CD14-positive monocyte (primary cell): ENCODE measurements at regions of chr2 and their contacts with region 1.

Region 1: DNA sequence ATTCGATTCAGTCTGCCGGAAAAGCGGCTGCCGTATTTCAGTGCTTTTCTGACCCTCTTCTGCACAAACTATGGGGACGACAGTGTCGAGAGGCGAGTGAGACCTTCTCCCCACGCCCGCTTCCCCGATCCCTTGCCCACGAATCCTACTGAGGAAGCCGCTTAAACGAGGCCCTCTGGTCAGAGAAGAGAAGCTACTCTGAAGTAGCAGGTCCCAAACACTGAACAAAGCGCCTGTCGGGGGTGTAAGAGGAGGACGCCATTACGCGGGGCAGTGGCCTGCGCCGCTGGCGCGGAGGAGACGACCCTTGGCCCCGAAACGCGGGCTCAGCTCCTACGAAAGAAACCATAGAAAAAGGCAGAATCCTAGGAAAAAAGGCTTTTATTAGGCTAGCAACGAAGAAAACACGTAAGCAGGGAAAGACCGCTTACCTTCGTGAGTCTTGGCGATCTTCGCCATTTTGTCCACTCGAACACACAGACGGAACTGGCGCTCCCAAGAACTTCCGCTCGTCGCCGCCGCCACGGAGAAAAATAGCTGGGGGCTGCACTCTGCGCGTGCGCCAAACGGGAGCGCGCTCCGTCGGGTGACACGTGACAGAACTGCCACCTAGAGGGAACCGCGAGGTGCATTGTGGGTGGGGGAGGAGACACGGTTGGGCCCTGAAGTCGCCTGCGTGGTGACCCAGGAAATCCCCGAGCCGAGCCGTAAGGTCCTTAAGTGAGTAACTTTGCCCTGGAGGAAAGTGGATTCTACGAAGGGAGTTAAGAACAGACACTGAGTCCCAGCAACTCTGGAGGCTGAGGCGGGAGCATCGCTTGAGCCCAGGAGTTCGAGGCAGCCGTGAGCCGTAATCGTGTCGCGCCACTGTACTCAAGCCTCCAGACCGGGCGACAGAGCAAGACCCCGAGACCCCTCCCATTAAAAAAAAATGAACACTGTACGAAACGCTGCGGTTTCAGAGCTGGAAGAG is at the start of gene SF3B1:
- DNase-seq: peak; percentile 99 to 100 (median 99)
- H3K4me3 ChIP-seq: peak within 1 kb of the TSS; percentile 91 to 96 (median 91)
- H3K4me3 Mint-ChIP-seq: peak within 1 kb of the TSS; percentile 95 to 99
- H3K27ac ChIP-seq: peak within 1 kb of the TSS; percentile 96 to 99
- H3K27ac Mint-ChIP-seq: peak within 1 kb of the TSS; percentile 100
- H3K4me1 ChIP-seq: peaks cover 40 to 43% of the 10 kb centered on the region in 2 donors
- H3K4me1 Mint-ChIP-seq: peaks cover 44% of the 10 kb centered on the region
- H3K27me3 ChIP-seq: no peaks in the 10 kb centered on the region
- H3K27me3 Mint-ChIP-seq: no peaks in the 10 kb centered on the region
- CTCF ChIP-seq: no peak
- polyA plus RNA-seq, gene SF3B1: 105 to 494 (median 152) TPM

Region 2: DNA sequence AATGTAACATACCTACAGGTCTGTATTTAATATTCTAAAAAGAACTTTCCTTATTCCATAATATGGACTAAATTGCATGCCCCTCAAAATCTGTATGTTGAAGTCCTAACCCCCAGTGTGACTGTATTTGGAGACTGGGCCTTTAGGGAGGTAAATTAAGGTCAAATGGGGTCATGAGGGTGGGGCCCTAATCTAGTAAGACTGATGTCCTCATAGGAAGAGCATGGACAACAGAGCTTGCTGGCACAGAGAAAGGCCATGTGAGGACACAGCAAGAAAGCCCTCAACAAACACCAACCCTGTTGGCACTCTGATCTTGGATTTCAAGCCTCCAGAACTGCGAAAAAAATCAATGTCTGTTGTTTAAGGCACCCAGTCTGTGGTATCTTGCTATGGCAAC is 18.6 kb before region 1 on chr2:
- intact Hi-C with region 1: no loop called
- DNase-seq: no peak
- H3K4me3 ChIP-seq: no peak overlapping the region
- H3K4me3 Mint-ChIP-seq: no peak overlapping the region
- H3K27ac ChIP-seq: no peak overlapping the region
- H3K27ac Mint-ChIP-seq: peak overlapping the region in 1 of 7 donors; percentile 46
- H3K4me1 ChIP-seq: no peaks in the 10 kb centered on the region
- H3K4me1 Mint-ChIP-seq: no peaks in the 10 kb centered on the region
- H3K27me3 ChIP-seq: no peaks in the 10 kb centered on the region
- H3K27me3 Mint-ChIP-seq: no peaks in the 10 kb centered on the region
- CTCF ChIP-seq: no peak

Region 3: DNA sequence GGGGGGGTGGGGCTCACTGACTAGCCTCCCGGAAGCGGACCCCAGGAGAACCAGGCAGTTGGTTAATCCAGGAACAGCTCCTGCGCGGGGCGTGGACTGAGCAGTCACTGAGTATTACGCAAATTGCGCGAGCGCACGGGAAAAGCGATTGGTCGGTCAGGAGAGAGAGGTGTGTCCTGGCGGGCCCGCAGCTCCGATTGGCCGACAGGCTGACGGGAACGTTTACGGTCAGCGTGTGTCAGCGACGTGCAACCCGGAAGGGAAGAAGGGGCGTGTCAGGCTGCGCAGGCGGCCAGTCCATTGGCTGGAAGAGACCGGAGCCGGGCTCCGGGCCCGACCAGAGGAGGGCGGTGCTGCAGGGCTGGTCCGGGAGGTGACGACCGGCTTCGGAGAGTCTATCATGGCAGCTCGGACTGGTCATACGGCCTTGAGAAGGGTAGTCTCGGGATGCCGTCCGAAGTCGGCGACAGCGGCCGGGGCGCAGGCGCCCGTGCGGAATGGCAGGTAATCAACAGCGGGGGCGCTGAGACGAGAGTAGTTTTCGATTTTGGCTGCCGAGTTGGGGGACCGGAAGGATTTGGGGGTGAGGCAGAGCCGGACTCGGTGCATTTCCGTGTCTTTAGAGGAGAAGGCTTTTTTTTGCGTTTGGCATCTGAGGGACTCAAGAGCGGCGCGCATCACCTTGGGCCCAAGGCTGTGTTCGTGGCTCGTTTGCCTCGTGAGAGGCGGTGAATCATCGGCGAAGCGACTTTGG is 18.5 kb after region 1 on chr2 and contains the start of gene COQ10B:
- intact Hi-C with region 1: loop called (anchors 1 kb)
- DNase-seq: peak; percentile 100
- H3K4me3 ChIP-seq: peak within 1 kb of the TSS; percentile 67 to 90 (median 75)
- H3K4me3 Mint-ChIP-seq: peak within 1 kb of the TSS; percentile 97 to 98
- H3K27ac ChIP-seq: peak within 1 kb of the TSS; percentile 94 to 100
- H3K27ac Mint-ChIP-seq: peak within 1 kb of the TSS; percentile 100
- H3K4me1 ChIP-seq: peaks cover 14 to 25% of the 10 kb centered on the region in 2 donors
- H3K4me1 Mint-ChIP-seq: peaks cover 36% of the 10 kb centered on the region
- H3K27me3 ChIP-seq: no peaks in the 10 kb centered on the region
- H3K27me3 Mint-ChIP-seq: peaks cover 0 to 4% (median 0%) of the 10 kb centered on the region in 3 donors
- CTCF ChIP-seq: no peak
- polyA plus RNA-seq, gene COQ10B: 6.7 to 46.6 (median 38.3) TPM

Region 4: GRCh38 chr2:197515739-197516392 is 81.0 kb after region 1 on chr2 and contains the start of gene MOB4:
- intact Hi-C with region 1: loop called in 1 of 2 experiments (anchors 5 kb)
- DNase-seq: peak; percentile 95 to 97 (median 95)
- H3K4me3 ChIP-seq: peak within 1 kb of the TSS; percentile 78 to 88 (median 87)
- H3K4me3 Mint-ChIP-seq: peak within 1 kb of the TSS; percentile 88 to 96
- H3K27ac ChIP-seq: peak within 1 kb of the TSS; percentile 94 to 95
- H3K27ac Mint-ChIP-seq: peak within 1 kb of the TSS; percentile 92 to 98 (median 96)
- H3K4me1 ChIP-seq: peaks cover 15 to 27% of the 10 kb centered on the region in 2 donors
- H3K4me1 Mint-ChIP-seq: peaks cover 22% of the 10 kb centered on the region
- H3K27me3 ChIP-seq: no peaks in the 10 kb centered on the region
- H3K27me3 Mint-ChIP-seq: no peaks in the 10 kb centered on the region
- CTCF ChIP-seq: no peak
- polyA plus RNA-seq, gene MOB4: 14.8 to 32.4 (median 30.4) TPM

Region 5: DNA sequence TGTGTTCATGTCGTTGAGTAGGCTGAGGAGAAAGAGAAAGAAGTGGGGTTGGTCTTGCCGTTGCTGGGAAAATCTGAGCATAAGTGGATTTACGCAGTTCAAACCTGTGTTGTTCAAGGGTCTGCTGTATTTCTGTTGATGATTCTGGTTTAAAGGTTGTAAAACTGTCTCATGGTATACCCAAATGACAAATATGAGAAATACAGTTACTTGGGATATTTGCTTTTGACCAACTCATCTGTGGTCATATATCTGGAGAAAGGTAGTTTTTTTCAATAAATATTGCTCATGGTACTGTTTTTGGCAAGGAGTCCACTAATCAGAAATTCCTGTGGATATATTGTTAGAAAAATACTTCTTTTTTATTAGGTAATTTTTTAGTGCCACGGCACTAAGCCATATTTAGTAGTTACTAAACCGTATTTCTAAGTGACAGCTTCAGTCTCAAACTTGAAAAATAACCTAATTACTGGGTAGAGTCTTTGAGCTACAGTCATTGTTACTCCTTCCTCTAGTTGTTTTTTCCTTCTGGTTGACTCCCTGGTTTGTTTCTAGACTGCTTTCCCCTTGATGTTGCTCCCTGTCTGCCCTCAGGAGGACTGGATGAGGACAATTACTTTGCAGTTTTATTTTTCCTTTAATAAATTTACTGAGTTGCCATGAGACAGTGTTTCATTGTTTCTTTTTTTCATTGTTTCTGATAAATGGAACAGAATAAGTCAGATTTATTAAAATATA is 112.5 kb after region 1 on chr2:
- intact Hi-C with region 1: no loop called
- DNase-seq: no peak
- H3K4me3 ChIP-seq: no peak overlapping the region
- H3K4me3 Mint-ChIP-seq: no peak overlapping the region
- H3K27ac ChIP-seq: peak overlapping the region in 1 of 2 donors; percentile 16
- H3K27ac Mint-ChIP-seq: peak overlapping the region in 4 of 7 donors; percentile 3 to 67 (median 53)
- H3K4me1 ChIP-seq: no peaks in the 10 kb centered on the region
- H3K4me1 Mint-ChIP-seq: peaks cover 3% of the 10 kb centered on the region
- H3K27me3 ChIP-seq: no peaks in the 10 kb centered on the region
- H3K27me3 Mint-ChIP-seq: no peaks in the 10 kb centered on the region
- CTCF ChIP-seq: no peak

Region 6: DNA sequence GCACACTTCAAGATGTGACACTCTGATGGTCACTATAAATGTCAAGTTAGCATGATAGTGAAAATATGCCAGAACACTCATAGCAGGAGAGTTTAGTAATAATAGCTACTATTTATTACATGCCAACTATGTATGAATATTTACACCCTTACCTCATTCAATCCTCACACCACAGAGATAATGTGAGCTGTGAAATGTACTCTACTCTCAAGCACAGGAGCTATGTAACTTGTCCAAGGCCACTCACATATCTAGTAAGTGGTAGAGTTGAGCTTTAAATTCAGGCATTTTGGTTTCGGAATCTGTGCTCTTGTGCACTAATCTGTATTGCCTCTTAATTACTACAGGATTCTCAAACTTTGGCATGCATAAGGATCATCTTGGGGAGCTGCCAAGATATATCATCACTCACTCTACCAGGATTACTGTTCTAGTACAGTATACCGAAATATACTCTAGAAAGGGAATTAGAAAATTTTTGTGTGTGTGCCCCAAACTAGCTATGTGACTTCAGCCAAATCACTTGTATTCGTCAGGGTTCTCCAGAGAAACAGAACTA is 523.8 kb after region 1 on chr2:
- intact Hi-C with region 1: no loop called
- DNase-seq: no peak
- H3K4me3 ChIP-seq: no peak overlapping the region
- H3K4me3 Mint-ChIP-seq: no peak overlapping the region
- H3K27ac ChIP-seq: no peak overlapping the region
- H3K27ac Mint-ChIP-seq: no peak overlapping the region
- H3K4me1 ChIP-seq: no peaks in the 10 kb centered on the region
- H3K4me1 Mint-ChIP-seq: no peaks in the 10 kb centered on the region
- H3K27me3 ChIP-seq: no peaks in the 10 kb centered on the region
- H3K27me3 Mint-ChIP-seq: peaks cover 0 to 1% (median 0%) of the 10 kb centered on the region in 3 donors
- CTCF ChIP-seq: no peak